Naive thymus-derived CD4-positive, alpha-beta T cell (primary cell): ENCODE measurements at regions of chr14 and their contacts with region 1.

Region 1: GRCh38 chr14:96962337-96962736 is 165.2 kb downstream of the VRK1 start:
- DNase-seq: peak in 7 of 9 donors; percentile 27 to 75 (median 59)
- ATAC-seq: peak; percentile 76
- H3K4me3 ChIP-seq: peak overlapping the region; percentile 14
- H3K4me3 Mint-ChIP-seq: peak overlapping the region; percentile 37 to 81 (median 76)
- H3K27ac ChIP-seq: peak overlapping the region; percentile 61
- H3K27ac Mint-ChIP-seq: peak overlapping the region; percentile 78 to 99 (median 94)
- H3K4me1 ChIP-seq: peaks cover 39 to 62% of the 10 kb centered on the region in 2 donors
- H3K4me1 Mint-ChIP-seq: peaks cover 17 to 76% (median 63%) of the 10 kb centered on the region in 7 donors
- H3K27me3 ChIP-seq: no peaks in the 10 kb centered on the region
- H3K27me3 Mint-ChIP-seq: no peaks in the 10 kb centered on the region

Region 2: GRCh38 chr14:97120611-97121031 is 158.3 kb after region 1 on chr14:
- CTCF ChIA-PET with region 1: no interaction called
- POLR2A ChIA-PET with region 1: interaction called, 3 read pairs
- intact Hi-C with region 1: loop called in 1 of 2 experiments (anchors 1 kb)
- DNase-seq: peak; percentile 10 to 69 (median 48)
- ATAC-seq: peak; percentile 85
- H3K4me3 ChIP-seq: no peak overlapping the region
- H3K4me3 Mint-ChIP-seq: peak overlapping the region; percentile 56 to 81 (median 70)
- H3K27ac ChIP-seq: peak overlapping the region; percentile 57
- H3K27ac Mint-ChIP-seq: peak overlapping the region; percentile 75 to 96 (median 92)
- H3K4me1 ChIP-seq: peaks cover 22 to 33% of the 10 kb centered on the region in 2 donors
- H3K4me1 Mint-ChIP-seq: peaks cover 26 to 58% (median 37%) of the 10 kb centered on the region in 7 donors
- H3K27me3 ChIP-seq: no peaks in the 10 kb centered on the region
- H3K27me3 Mint-ChIP-seq: no peaks in the 10 kb centered on the region